ENCODE measurements at regions of chr9 and their contacts with region 1.

Region 1: DNA sequence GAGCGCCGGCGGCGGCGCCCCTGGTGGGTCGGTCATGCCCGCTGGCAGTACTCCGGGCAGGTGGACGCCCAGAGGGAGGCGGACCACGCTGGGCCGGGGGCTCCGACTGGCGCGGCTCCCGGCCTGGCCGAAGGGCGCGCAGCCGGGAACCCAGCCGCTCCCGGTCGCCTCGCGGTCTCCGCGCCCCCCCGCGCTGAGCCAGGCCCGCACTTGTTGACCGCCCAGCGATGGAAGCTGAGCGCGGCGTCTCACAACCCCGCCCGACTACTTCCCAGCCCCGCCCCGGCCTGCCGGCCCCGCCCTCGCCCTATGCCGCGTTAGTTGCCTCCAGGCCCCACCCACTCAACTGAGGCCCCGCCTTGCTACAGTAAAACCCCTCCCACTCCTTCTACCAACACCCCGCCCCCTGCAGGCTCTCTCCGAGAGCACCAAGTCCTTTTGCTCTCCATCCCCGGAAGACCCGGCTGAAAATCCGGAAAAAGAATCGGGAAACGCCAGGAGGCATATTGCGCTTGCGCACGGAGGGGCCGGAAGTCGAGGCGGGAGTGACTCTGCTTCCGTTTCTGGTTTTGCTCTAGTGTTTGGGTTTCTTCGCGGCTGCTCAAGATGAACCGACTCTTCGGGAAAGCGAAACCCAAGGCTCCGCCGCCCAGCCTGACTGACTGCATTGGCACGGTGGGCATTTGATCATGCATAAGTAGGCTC is at the starts of genes BAG1 and CHMP5:
- DNase-seq: peak; percentile 99
- H3K4me3 Mint-ChIP-seq: peak within 1 kb of the TSS; percentile 96
- H3K27ac Mint-ChIP-seq: peak within 1 kb of the TSS; percentile 94
- H3K4me1 Mint-ChIP-seq: peaks cover 58% of the 10 kb centered on the region
- H3K27me3 Mint-ChIP-seq: no peaks in the 10 kb centered on the region
- total RNA-seq, gene BAG1: 75.0 and 78.2 TPM in 2 replicates
- total RNA-seq, gene CHMP5: 70.7 and 76.7 TPM in 2 replicates

Region 2: DNA sequence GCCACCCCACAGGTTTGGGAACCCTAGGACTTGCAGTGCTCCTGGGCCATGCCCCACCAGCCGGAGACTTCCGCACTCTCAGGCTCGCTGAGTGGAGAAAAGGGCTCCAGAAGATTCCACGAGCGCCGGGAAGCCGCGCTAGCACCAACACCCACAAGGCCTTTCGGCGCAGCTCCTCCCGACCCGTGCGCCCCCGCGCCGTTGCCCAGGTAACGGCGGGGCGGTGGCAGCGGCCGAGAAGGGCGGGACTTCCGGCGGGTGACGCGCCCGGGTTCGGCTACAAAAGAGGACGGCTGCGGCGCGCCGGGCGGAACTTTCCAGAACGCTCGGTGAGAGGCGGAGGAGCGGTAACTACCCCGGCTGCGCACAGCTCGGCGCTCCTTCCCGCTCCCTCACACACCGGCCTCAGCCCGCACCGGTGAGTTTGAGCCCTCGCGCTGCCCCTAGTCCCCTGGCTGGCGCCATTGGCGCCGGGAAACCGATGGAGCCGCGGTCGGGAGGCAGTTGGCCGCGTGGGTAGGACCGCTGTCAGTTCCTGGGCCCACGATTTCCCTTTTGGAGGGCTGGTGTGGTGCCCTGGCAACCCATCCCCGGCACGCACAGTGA is 239.6 kb before region 1 on chr9 and contains the start of gene DNAJA1:
- intact Hi-C with region 1: loop called (anchors 1 kb)
- DNase-seq: peak; percentile 95
- H3K4me3 Mint-ChIP-seq: peak within 1 kb of the TSS; percentile 94
- H3K27ac Mint-ChIP-seq: peak within 1 kb of the TSS; percentile 98
- H3K4me1 Mint-ChIP-seq: peaks cover 68% of the 10 kb centered on the region
- H3K27me3 Mint-ChIP-seq: no peaks in the 10 kb centered on the region
- total RNA-seq, gene DNAJA1: 296 and 312 TPM in 2 replicates

Region 3: DNA sequence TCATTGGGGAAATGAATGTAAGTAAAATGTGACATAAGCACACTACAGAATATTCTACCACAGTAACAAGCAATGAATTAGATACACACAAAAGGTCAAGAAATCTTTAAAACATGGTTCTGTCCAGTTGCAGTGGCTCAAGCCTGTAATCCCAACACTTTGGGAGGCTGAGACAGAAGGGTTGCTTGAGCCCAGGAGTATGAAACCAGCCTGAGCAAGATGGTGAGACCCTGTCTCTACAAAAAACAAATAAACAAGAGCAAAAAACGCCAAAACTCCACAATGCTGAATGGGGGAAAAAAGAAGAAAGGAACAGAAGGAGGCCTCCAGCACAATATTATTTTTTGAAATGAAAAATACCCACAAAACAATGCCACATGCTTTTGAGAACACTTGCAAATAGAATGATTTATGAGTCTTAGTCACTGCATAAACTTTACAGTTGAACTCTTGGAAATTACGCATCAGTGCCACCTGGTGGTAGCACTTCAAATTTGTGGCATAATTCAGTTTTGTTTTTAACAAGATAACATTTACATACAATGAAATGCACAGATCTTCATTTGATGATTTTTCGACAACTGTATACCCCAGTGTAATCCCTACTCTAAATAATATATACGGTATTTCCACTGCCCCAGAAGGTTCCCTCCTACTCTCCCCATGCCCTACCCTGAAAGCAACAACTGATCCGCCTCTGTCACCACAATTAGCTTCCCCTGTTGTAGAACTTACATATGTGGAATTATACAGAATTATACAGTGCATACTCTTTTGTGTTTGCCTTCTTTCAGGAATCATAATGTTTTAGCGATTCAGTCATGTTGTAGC is 39.1 kb before region 1 on chr9:
- intact Hi-C with region 1: loop called (anchors 1 kb)
- DNase-seq: peak; percentile 55
- H3K4me3 Mint-ChIP-seq: no peak overlapping the region
- H3K27ac Mint-ChIP-seq: peak overlapping the region; percentile 70
- H3K4me1 Mint-ChIP-seq: peaks cover 36% of the 10 kb centered on the region
- H3K27me3 Mint-ChIP-seq: no peaks in the 10 kb centered on the region

Region 4: DNA sequence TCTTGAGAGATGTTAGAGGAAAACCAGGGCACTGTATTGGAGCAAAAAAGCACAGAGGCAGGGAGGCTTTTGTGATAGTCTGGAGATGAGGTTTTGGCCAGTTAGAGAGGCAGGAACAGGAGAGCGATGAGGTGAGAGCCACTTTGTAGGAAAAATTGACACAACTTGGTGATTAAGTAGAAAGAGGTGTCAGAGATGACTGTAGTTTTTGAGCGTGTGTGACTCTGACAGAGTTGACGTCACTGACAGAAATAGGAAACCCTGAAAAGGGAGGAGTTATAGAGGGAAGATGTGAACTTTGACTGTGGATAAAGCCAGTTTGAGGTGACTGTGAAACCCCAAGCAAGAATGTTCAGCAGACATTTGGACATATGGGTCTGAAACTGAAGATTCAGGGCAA is 41.4 kb after region 1 on chr9:
- intact Hi-C with region 1: loop called (anchors 1 kb)
- DNase-seq: peak; percentile 42
- H3K4me3 Mint-ChIP-seq: no peak overlapping the region
- H3K27ac Mint-ChIP-seq: no peak overlapping the region
- H3K4me1 Mint-ChIP-seq: peaks cover 9% of the 10 kb centered on the region
- H3K27me3 Mint-ChIP-seq: no peaks in the 10 kb centered on the region

Region 5: GRCh38 chr9:33354651-33355211 is 90.1 kb after region 1 on chr9:
- intact Hi-C with region 1: no loop called
- DNase-seq: no peak
- H3K4me3 Mint-ChIP-seq: no peak overlapping the region
- H3K27ac Mint-ChIP-seq: peak overlapping the region; percentile 56
- H3K4me1 Mint-ChIP-seq: no peaks in the 10 kb centered on the region
- H3K27me3 Mint-ChIP-seq: no peaks in the 10 kb centered on the region

Measured in activated T-helper 1 cell treated with anti-CD3 and anti-CD28 coated beads, Interleukin-12 subunit alpha, Interleukin-12 subunit beta, Interleukin-2, Interleukin-4 antibody, amounts not matched to agents 30 ng/mL and 10 ng/mL and 1 ng/mL, durations not matched to agents 14 hours and 24 hours and 36 hours (primary cell).